Activated naive CD4-positive, alpha-beta T cell treated with anti-CD3 and anti-CD28 coated beads for 36 hours (primary cell): ENCODE measurements at regions of chr9 and their contacts with region 1.

Region 1: GRCh38 chr9:125650271-125650737 is 56.7 kb downstream of the MAPKAP1 start:
- DNase-seq: peak; percentile 60
- H3K4me3 Mint-ChIP-seq: peak overlapping the region; percentile 14
- H3K27ac Mint-ChIP-seq: peak overlapping the region; percentile 51
- H3K4me1 Mint-ChIP-seq: peaks cover 81% of the 10 kb centered on the region
- H3K27me3 Mint-ChIP-seq: no peaks in the 10 kb centered on the region

Region 2: GRCh38 chr9:125200210-125201047 is 449.9 kb before region 1 on chr9 and contains the start of gene RABEPK:
- CTCF ChIA-PET with region 1: no interaction called
- intact Hi-C with region 1: loop called (anchors 5 kb)
- DNase-seq: peak; percentile 91
- H3K4me3 Mint-ChIP-seq: peak within 1 kb of the TSS; percentile 91
- H3K27ac Mint-ChIP-seq: peak within 1 kb of the TSS; percentile 81
- H3K4me1 Mint-ChIP-seq: peaks cover 39% of the 10 kb centered on the region
- H3K27me3 Mint-ChIP-seq: no peaks in the 10 kb centered on the region
- total RNA-seq, gene RABEPK: 18.4 to 19.8 TPM

Region 3: DNA sequence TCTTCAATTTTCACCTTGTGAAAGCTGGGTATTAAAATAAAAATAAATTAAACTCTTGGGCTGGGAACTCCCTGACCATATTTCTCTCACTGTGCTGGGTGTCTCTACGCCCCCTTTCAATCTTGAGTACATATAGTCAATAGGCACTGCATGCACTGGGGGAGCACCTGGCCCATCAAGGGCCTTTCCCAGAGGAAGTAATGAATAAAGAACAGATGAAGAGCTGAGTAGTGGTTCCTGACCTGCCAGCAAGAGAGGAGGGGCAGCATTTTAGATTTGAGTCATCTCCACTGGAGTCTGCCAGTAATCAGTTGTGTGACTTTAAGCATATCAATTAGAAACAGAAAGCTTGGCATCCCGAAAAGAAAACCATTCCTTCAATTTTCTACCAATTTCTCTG is 50.5 kb after region 1 on chr9:
- CTCF ChIA-PET with region 1: no interaction called
- intact Hi-C with region 1: loop called (anchors 1 kb)
- DNase-seq: peak; percentile 80
- H3K4me3 Mint-ChIP-seq: no peak overlapping the region
- H3K27ac Mint-ChIP-seq: peak overlapping the region; percentile 47
- H3K4me1 Mint-ChIP-seq: peaks cover 58% of the 10 kb centered on the region
- H3K27me3 Mint-ChIP-seq: no peaks in the 10 kb centered on the region

Region 4: GRCh38 chr9:125706661-125707471 is 56.6 kb after region 1 on chr9 and contains the start of gene MAPKAP1:
- CTCF ChIA-PET with region 1: no interaction called
- intact Hi-C with region 1: loop called (anchors 1 kb)
- DNase-seq: peak; percentile 96
- H3K4me3 Mint-ChIP-seq: peak within 1 kb of the TSS; percentile 83
- H3K27ac Mint-ChIP-seq: peak within 1 kb of the TSS; percentile 87
- H3K4me1 Mint-ChIP-seq: peaks cover 38% of the 10 kb centered on the region
- H3K27me3 Mint-ChIP-seq: no peaks in the 10 kb centered on the region
- total RNA-seq, gene MAPKAP1: 54.8 to 57.4 TPM

Region 5: GRCh38 chr9:125746017-125746773 is 95.9 kb after region 1 on chr9:
- CTCF ChIA-PET with region 1: no interaction called
- intact Hi-C with region 1: loop called (anchors 1 kb)
- DNase-seq: peak; percentile 93
- H3K4me3 Mint-ChIP-seq: peak overlapping the region; percentile 91
- H3K27ac Mint-ChIP-seq: peak overlapping the region; percentile 90
- H3K4me1 Mint-ChIP-seq: peaks cover 25% of the 10 kb centered on the region
- H3K27me3 Mint-ChIP-seq: peaks cover 6% of the 10 kb centered on the region

Region 6: GRCh38 chr9:125820100-125820804 is 169.9 kb after region 1 on chr9:
- CTCF ChIA-PET with region 1: no interaction called
- intact Hi-C with region 1: loop called (anchors 5 kb)
- DNase-seq: no peak
- H3K4me3 Mint-ChIP-seq: no peak overlapping the region
- H3K27ac Mint-ChIP-seq: no peak overlapping the region
- H3K4me1 Mint-ChIP-seq: peaks cover 20% of the 10 kb centered on the region
- H3K27me3 Mint-ChIP-seq: no peaks in the 10 kb centered on the region